Posterior vena cava (tissue), 2 donors: ENCODE measurements at regions of chr1 and their contacts with region 1.

Region 1: DNA sequence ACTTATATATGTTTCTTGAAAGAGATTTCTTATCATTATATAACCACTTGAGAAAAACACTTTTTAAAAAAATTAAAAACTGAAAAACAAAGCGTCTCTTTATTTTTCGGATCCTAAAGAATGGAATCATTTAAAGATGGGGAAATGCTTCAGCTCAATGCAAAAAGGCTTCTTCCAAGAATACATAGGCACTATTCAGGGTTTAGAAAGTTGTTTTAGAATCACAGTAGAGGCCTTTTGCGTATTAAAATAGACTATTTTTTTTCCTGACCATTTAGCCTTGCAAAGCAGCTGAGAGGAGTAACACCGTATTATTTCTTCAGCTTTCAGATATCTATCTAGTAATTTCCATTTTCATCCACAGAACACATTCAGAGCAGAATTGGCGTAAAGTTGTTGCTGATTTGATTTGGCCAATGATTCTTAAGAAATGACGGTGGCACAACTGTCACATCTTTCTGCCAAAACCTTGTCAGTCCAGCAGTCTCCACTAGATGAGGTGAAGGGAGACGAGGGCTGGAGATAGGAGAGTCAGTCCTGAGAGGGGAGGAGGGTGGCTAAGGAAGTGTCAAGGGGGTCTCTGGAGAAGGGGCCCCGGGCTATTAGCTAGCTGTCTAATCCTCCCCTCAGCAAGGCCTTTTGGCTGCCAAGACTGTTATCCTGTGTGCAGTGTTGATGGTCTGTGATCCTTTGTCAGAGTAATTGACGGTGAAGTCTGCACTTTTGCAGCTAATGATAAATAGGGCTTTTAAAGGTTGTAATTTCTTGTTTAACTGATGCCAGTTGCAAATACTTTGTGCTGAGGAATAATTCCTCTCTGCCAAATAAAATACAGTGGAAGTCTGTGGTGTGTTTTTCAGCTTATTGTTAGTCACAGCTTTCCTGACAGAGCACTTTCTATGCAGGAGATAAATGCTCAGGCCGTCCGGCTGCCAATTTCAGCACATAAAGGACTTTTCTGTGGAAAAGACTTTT is 34.7 kb downstream of the PRRX1 start:
- DNase-seq: no peak

Region 2: DNA sequence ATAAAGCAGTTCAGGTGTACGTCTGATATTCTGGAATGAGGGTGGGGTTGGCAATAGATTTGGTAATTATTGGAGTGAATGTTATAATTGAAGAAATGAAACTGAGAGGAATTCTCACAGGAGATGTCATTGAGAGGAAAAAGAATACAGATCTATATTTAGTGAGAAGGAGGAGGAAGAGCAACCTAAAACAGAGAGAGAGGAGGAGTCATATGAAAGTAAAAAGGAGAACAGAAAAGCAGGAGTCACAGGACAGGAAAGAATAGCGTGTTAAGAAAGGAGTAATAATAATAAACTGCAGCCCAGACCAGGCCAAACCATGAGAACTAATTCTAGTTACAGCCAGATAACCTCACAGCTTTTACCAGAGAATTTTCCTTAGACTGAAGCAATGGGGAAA is 174.1 kb after region 1 on chr1:
- intact Hi-C with region 1: loop called in 1 of 2 experiments (anchors 10 kb)
- DNase-seq: no peak